Calu3 (cell line): ENCODE measurements at regions of chr2 and their contacts with region 1.

Region 1: DNA sequence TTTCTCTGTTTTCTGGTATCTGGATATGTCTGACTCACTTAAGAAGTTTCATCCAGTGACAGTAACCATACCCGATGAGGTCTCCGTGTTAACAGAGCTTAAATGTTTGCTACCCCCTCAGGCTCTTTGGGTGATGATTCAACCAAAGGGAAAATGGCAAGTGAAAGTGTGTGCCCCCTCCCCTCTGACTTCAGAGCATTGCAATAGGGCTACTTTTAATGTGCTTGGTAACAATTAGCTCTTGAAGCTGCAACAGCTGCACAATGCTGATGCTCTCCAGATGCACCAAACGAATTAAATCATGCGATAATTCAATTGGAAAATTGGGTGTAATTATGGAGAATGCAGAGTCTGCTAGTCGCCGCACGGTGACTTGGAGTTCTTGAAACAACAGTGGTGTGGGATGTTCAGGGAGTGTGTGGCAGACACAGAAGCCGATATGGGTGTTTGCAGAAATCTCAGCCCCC is 270.7 kb downstream of the ALK start:
- DNase-seq: no peak
- H3K4me3 Mint-ChIP-seq: no peak overlapping the region
- H3K27ac Mint-ChIP-seq: no peak overlapping the region
- H3K4me1 Mint-ChIP-seq: no peaks in the 10 kb centered on the region
- H3K27me3 Mint-ChIP-seq: peaks cover 81% of the 10 kb centered on the region
- CTCF ChIP-seq: no peak

Region 2: DNA sequence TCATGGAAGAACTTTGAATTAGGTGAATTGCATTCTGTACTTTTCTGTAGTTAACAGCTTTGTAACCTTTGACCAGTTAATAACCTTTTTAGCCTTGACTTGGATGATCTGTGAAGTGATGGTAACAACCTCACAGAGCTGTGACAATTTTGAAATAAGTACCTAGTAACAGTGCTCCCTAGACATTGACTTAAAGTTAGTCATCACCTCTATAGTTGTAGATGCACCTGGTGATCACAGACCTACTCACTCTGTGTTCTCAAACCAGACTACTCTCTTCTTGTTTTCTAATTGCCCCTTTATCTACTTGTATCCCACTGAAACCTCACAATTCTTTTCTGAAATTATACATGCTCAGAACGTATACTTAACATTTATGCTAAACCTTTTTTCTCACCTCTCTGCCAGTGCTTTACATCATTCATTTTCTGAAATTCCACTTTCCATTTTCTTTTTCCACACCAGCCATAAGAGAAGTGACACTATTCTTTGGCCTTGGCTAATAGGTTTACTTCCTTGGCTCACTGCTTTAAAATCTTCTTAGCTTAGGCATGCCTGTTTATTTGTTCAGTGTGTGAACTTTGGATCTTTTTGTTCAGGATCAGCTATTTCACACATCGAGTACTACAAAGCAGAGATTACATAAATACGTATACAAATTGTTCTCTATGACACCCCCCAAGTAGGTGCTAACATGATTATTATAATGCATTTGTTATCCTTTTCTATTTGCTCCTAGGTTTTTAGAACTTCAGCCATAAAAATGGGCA is 505.4 kb after region 1 on chr2:
- CTCF ChIA-PET with region 1: interaction called, 11 read pairs
- intact Hi-C with region 1: no loop called
- DNase-seq: no peak
- H3K4me3 Mint-ChIP-seq: no peak overlapping the region
- H3K27ac Mint-ChIP-seq: no peak overlapping the region
- H3K4me1 Mint-ChIP-seq: peaks cover 10% of the 10 kb centered on the region
- H3K27me3 Mint-ChIP-seq: no peaks in the 10 kb centered on the region
- CTCF ChIP-seq: no peak